Vagina (tissue), 2 donors: ENCODE measurements at regions of chr9 and their contacts with region 1.

Region 1: GRCh38 chr9:16626577-16627131 is 243.8 kb downstream of the BNC2 start:
- DNase-seq: no peak
- H3K4me3 ChIP-seq: peak overlapping the region in 1 of 2 donors; percentile 12
- H3K27ac ChIP-seq: peak overlapping the region; percentile 6
- H3K4me1 ChIP-seq: peaks cover 41% of the 10 kb centered on the region
- H3K27me3 ChIP-seq: no peaks in the 10 kb centered on the region
- CTCF ChIP-seq: no peak
- POLR2A ChIP-seq: no peak

Region 2: GRCh38 chr9:16645970-16646369 is 19.3 kb after region 1 on chr9:
- intact Hi-C with region 1: loop called (anchors 2 kb)
- DNase-seq: no peak
- H3K4me3 ChIP-seq: no peak overlapping the region
- H3K27ac ChIP-seq: no peak overlapping the region
- H3K4me1 ChIP-seq: peaks cover 7% of the 10 kb centered on the region
- H3K27me3 ChIP-seq: no peaks in the 10 kb centered on the region
- CTCF ChIP-seq: no peak
- POLR2A ChIP-seq: no peak